ENCODE measurements at regions of chr14 and their contacts with region 1.

Region 1: GRCh38 chr14:70013269-70013873 is 134.2 kb downstream of the SMOC1 start:
- DNase-seq: peak; percentile 37
- H3K4me3 ChIP-seq: no peak overlapping the region
- H3K27ac ChIP-seq: no peak overlapping the region
- H3K4me1 ChIP-seq: peaks cover 38% of the 10 kb centered on the region
- H3K27me3 ChIP-seq: no peaks in the 10 kb centered on the region
- CTCF ChIP-seq: peak; percentile 84 to 90

Region 2: DNA sequence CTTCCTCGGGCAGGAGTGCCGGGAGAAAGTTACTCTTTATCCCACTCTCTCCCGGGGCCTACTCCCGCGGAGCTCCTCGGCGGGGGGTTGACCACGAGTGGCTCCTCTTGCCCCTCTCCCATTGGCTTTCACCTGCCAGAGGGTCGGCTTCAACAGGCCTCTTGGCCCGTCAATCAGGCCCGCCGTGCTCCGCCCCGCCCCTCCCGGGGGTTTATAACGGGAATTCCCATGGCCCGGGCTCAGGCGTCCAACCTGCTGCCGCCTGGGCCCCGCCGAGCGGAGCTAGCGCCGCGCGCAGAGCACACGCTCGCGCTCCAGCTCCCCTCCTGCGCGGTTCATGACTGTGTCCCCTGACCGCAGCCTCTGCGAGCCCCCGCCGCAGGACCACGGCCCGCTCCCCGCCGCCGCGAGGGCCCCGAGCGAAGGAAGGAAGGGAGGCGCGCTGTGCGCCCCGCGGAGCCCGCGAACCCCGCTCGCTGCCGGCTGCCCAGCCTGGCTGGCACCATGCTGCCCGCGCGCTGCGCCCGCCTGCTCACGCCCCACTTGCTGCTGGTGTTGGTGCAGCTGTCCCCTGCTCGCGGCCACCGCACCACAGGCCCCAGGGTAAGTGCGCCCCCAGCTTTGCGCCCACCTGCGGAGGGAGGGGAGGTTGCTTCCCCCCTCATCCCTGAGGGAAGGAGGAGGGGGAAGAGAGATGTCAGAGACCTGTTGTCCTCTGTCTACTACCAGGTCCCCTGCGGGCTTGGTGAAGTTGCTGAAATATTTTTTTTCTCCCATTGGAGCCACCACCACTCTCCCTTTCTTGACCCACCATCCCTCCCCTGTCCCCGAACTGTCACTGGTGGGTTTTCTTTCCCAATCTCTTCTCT is 134.0 kb before region 1 on chr14 and contains the start of gene SMOC1:
- CTCF ChIA-PET with region 1: interaction called, 3 read pairs
- dilution Hi-C with region 1: no loop called
- in situ Hi-C with region 1: loop called in 1 of 2 experiments (anchors 10 kb)
- intact Hi-C with region 1: loop called (anchors 1 kb)
- DNase-seq: peak; percentile 85
- H3K4me3 ChIP-seq: peak within 1 kb of the TSS in 2 of 3 experiments; percentile 49 to 50
- H3K27ac ChIP-seq: no peak within 1 kb of the TSS
- H3K4me1 ChIP-seq: peaks cover 5% of the 10 kb centered on the region
- H3K27me3 ChIP-seq: no peaks in the 10 kb centered on the region
- CTCF ChIP-seq: no peak
- total RNA-seq, gene SMOC1: 22.3 to 44.9 TPM

Region 3: GRCh38 chr14:69937367-69938081 is 75.8 kb before region 1 on chr14:
- CTCF ChIA-PET with region 1: no interaction called
- dilution Hi-C with region 1: no loop called
- in situ Hi-C with region 1: no loop called
- intact Hi-C with region 1: loop called (anchors 5 kb)
- DNase-seq: no peak
- H3K4me3 ChIP-seq: no peak overlapping the region
- H3K27ac ChIP-seq: no peak overlapping the region
- H3K4me1 ChIP-seq: peaks cover 6% of the 10 kb centered on the region
- H3K27me3 ChIP-seq: no peaks in the 10 kb centered on the region
- CTCF ChIP-seq: no peak

Region 4: GRCh38 chr14:69999112-69999631 is 14.2 kb before region 1 on chr14:
- CTCF ChIA-PET with region 1: no interaction called
- dilution Hi-C with region 1: no loop called
- in situ Hi-C with region 1: no loop called
- intact Hi-C with region 1: loop called (anchors 1 kb)
- DNase-seq: peak; percentile 100
- H3K4me3 ChIP-seq: no peak overlapping the region
- H3K27ac ChIP-seq: peak overlapping the region; percentile 95
- H3K4me1 ChIP-seq: peaks cover 60% of the 10 kb centered on the region
- H3K27me3 ChIP-seq: no peaks in the 10 kb centered on the region
- CTCF ChIP-seq: no peak

Measured in mammary epithelial cell (primary cell).